ENCODE measurements at regions of chr10 and their contacts with region 1.

Region 1: GRCh38 chr10:28334296-28334695 is 31.4 kb upstream of the MPP7 start:
- DNase-seq: no peak
- ATAC-seq: peak; percentile 56
- H3K4me3 Mint-ChIP-seq: peak overlapping the region; percentile 79
- H3K27ac Mint-ChIP-seq: peak overlapping the region; percentile 97
- H3K4me1 Mint-ChIP-seq: peaks cover 46% of the 10 kb centered on the region
- H3K27me3 Mint-ChIP-seq: no peaks in the 10 kb centered on the region
- CTCF ChIP-seq: no peak

Region 2: DNA sequence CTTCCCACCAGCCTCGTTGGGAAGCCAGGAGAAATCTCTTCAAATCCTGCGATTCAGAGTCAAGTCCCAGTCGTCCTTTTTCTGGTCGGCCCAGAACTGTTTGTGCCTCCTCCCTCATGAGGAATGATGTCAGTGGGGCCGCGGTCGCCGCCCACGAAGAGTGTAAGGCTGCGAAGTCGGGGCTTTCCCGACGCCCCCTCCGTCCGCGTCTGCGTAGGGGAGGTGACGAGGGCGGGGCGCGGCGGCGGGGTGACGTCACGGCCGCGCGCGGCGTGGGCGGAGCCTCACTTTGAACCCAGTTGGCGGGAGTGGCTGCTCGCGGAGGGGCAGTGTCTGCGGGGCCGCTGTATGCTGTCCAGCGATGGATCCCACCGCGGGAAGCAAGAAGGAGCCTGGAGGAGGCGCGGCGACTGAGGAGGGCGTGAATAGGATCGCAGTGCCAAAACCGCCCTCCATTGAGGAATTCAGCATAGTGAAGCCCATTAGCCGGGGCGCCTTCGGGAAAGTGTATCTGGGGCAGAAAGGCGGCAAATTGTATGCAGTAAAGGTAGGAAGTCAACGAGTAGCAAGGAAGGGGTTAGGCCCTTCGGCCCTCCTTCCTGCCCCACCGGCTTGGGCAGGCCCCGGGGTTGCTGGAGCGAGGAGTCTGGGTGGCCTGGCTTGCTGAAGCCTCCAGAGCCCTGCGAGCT is 1179.1 kb before region 1 on chr10 and contains the start of gene MASTL:
- CTCF ChIA-PET with region 1: no interaction called
- POLR2A ChIA-PET with region 1: no interaction called
- intact Hi-C with region 1: loop called (anchors 2 kb)
- DNase-seq: peak; percentile 97
- ATAC-seq: peak; percentile 84
- H3K4me3 Mint-ChIP-seq: peak within 1 kb of the TSS; percentile 100
- H3K27ac Mint-ChIP-seq: peak within 1 kb of the TSS; percentile 100
- H3K4me1 Mint-ChIP-seq: peaks cover 44% of the 10 kb centered on the region
- H3K27me3 Mint-ChIP-seq: no peaks in the 10 kb centered on the region
- CTCF ChIP-seq: no peak
- total RNA-seq, gene MASTL: 11.2 and 12.4 TPM in 2 replicates

Region 3: DNA sequence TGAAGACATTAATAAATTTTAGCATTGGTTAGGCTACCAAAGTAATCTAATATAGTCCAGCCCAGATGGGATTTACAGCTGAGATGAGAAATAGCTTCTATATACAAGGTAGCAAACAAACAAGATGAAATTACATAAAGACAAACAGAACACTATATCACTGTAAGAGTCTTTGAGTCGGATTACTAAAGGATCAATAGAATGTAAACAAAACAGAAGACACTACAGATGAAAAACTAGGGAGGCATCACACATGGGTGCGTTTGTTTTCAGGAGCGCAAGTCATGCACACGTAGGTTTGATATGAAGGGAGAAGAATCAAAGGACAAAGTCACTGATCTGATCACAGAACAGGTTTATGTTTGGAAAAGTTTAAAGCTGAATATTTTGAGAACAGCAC is 57.9 kb before region 1 on chr10:
- CTCF ChIA-PET with region 1: no interaction called
- POLR2A ChIA-PET with region 1: interaction called, 10 read pairs
- intact Hi-C with region 1: no loop called
- DNase-seq: no peak
- ATAC-seq: no peak
- H3K4me3 Mint-ChIP-seq: no peak overlapping the region
- H3K27ac Mint-ChIP-seq: no peak overlapping the region
- H3K4me1 Mint-ChIP-seq: peaks cover 1% of the 10 kb centered on the region
- H3K27me3 Mint-ChIP-seq: no peaks in the 10 kb centered on the region
- CTCF ChIP-seq: no peak

Region 4: DNA sequence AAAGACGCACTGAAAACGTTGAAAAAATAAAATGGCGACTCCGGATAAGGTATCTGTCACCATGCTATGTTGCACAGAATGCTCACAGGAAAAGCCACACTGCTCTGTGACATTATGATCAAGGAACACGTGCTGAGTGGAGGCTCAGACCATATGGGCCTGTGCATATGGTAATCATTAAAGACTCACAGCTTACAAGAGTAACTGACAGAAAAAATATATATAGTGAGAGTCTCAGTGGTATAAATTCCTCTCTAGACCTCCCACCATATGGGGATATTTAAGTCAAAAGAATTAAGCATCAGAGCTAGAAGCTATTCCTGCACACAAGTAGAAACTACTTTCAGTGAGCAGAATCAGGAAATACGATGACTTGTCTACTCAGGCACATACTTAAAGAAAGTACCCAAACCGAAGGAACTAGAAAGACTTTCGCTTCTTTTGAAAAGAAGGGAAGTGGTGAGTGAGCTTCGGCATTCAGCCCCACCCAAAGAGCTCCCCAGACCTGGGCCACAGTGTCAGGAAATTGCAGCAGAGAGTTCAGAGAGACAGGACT is 33.7 kb after region 1 on chr10:
- CTCF ChIA-PET with region 1: interaction called, 6 read pairs
- POLR2A ChIA-PET with region 1: interaction called, 23 read pairs
- intact Hi-C with region 1: loop called (anchors 1 kb)
- DNase-seq: peak; percentile 20
- ATAC-seq: peak; percentile 98
- H3K4me3 Mint-ChIP-seq: peak overlapping the region; percentile 70
- H3K27ac Mint-ChIP-seq: peak overlapping the region; percentile 95
- H3K4me1 Mint-ChIP-seq: peaks cover 41% of the 10 kb centered on the region
- H3K27me3 Mint-ChIP-seq: no peaks in the 10 kb centered on the region
- CTCF ChIP-seq: no peak

Region 5: GRCh38 chr10:28532383-28533175 is 198.3 kb after region 1 on chr10 and contains the start of gene WAC:
- CTCF ChIA-PET with region 1: no interaction called
- POLR2A ChIA-PET with region 1: interaction called, 10 read pairs
- intact Hi-C with region 1: loop called (anchors 1 kb)
- DNase-seq: peak; percentile 97
- ATAC-seq: peak; percentile 79
- H3K4me3 Mint-ChIP-seq: peak within 1 kb of the TSS; percentile 99
- H3K27ac Mint-ChIP-seq: peak within 1 kb of the TSS; percentile 100
- H3K4me1 Mint-ChIP-seq: peaks cover 63% of the 10 kb centered on the region
- H3K27me3 Mint-ChIP-seq: no peaks in the 10 kb centered on the region
- CTCF ChIP-seq: no peak
- total RNA-seq, gene WAC: 145 and 159 TPM in 2 replicates

Region 6: GRCh38 chr10:28551086-28551485 is 216.8 kb after region 1 on chr10:
- CTCF ChIA-PET with region 1: no interaction called
- POLR2A ChIA-PET with region 1: no interaction called
- intact Hi-C with region 1: no loop called
- DNase-seq: no peak
- ATAC-seq: no peak
- H3K4me3 Mint-ChIP-seq: no peak overlapping the region
- H3K27ac Mint-ChIP-seq: no peak overlapping the region
- H3K4me1 Mint-ChIP-seq: peaks cover 76% of the 10 kb centered on the region
- H3K27me3 Mint-ChIP-seq: no peaks in the 10 kb centered on the region
- CTCF ChIP-seq: no peak

Region 7: GRCh38 chr10:28796606-28797512 is 462.6 kb after region 1 on chr10:
- CTCF ChIA-PET with region 1: no interaction called
- POLR2A ChIA-PET with region 1: no interaction called
- intact Hi-C with region 1: no loop called
- DNase-seq: no peak
- ATAC-seq: no peak
- H3K4me3 Mint-ChIP-seq: no peak overlapping the region
- H3K27ac Mint-ChIP-seq: no peak overlapping the region
- H3K4me1 Mint-ChIP-seq: no peaks in the 10 kb centered on the region
- H3K27me3 Mint-ChIP-seq: peaks cover 2% of the 10 kb centered on the region
- CTCF ChIP-seq: no peak

Measured in activated B cell treated with CpG ODN at 0.5 μM for 24 hours (primary cell).